PC-3 (cell line): ENCODE measurements at regions of chr20 and their contacts with region 1.

Region 1: DNA sequence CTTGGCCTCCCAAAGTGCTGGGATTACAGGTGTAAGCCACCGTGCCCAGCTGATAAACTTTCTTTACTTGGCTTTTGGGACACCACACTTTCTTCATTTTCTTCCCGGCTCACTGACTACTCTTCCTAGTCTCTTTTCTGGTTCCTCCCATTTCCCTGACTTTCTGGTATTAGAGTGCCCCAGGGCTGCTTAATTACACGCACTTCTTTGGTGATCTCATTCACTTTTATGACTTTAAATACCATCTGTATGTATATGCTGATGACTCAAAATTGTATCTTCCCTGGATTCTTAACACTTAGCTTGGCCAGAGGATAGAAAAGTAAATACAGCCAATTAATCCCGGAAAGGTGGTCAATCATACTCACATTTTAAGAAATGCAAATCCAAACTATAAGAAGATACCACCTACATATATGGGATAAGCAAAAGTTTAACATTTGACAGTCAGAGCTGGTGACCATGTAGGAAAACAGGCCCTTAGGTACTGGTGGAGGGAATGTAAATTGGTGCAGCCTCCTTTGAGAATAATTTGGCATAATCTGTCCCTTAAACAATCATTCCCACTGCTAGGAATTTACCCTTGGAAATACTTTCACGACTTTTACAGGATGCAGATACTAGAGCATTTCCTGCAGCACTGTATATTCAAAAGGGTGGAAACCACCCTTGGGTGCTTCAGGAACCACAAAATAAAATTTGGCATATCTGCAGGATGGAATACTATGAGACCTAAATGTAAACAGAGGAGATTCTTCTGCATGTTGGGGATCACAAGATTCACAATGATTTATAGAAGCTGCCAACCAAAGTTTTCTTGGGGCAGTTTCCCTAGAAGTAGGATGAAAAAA is 9.4 kb upstream of the NANP start:
- DNase-seq: peak; percentile 94
- ATAC-seq: peak; percentile 94
- H3K4me3 ChIP-seq: no peak overlapping the region; the same call in 1 of the 2 replicates
- H3K27ac ChIP-seq: peak overlapping the region; percentile 81
- H3K4me1 ChIP-seq: peaks cover 20% of the 10 kb centered on the region
- H3K27me3 ChIP-seq: no peaks in the 10 kb centered on the region
- CTCF ChIP-seq: no peak

Region 2: DNA sequence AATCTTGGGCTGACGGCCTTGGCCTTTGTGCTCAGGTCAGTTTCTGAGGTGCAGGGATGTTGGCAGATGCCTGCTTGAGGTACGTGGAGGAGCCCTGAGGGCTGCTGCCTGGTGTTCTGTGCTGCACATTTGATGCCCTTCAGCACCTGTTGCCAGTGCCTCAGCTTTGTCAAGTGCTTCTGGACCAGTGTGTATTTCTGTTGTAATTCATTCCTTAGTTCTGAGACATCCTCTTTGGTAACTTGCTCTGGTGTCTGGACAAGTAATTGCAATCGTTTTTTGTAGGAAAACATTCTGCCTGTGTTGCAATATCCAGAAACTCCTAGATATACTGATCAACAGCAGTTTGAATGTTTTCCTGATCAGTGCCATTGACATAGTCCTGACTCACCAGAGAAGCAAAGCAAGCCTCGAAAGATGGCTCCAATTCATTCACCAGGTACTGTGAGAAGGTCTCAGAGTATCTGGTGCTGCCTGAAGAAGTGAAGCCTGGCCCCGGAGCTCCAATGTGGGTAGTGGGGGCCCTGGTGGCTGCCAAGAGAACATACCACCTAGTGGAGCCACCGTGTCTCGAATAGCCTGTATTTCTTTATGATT is 36.8 kb after region 1 on chr20:
- CTCF ChIA-PET with region 1: no interaction called
- POLR2A ChIA-PET with region 1: no interaction called
- intact Hi-C with region 1: loop called (anchors 5 kb)
- DNase-seq: peak; percentile 49
- ATAC-seq: peak; percentile 56
- H3K4me3 ChIP-seq: no peak overlapping the region
- H3K27ac ChIP-seq: no peak overlapping the region
- H3K4me1 ChIP-seq: no peaks in the 10 kb centered on the region
- H3K27me3 ChIP-seq: no peaks in the 10 kb centered on the region
- CTCF ChIP-seq: peak; percentile 42